ENCODE measurements at regions of chr12 and their contacts with region 1.

Region 1: DNA sequence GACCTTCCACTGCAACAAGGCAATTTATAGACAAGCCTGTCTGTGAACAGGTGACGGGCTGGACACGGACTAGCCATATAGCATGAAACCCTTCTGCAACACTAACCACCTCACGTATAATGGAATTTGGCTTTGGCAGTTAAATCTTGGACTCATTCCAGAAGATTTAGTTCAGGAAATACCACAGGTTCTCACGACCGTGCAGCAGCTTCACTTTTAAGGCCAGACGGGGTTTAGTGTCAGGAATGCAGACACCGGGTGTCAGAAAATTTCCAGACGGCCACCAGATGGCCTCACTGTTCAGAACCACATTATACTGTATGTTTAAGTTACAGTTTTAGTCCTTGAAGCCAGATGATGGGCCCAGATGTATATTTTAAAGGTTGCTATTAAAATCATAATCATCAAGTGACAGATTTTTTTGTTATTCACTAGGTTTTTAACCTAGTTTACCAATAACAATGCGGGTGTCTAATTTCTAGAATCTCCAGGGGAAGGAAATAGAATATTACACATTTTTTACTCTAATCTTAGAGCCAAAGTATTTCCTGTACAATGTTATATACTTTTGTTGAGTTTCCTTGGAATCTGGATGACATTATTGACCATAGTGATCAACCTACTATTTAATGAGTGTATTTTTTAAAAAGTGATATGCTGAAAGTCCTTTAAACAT is 90.5 kb upstream of the TMPO start:
- DNase-seq: peak; percentile 77
- H3K4me3 ChIP-seq: no peak overlapping the region
- H3K27ac ChIP-seq: no peak overlapping the region
- H3K4me1 ChIP-seq: peaks cover 8% of the 10 kb centered on the region
- H3K27me3 ChIP-seq: no peaks in the 10 kb centered on the region

Region 2: DNA sequence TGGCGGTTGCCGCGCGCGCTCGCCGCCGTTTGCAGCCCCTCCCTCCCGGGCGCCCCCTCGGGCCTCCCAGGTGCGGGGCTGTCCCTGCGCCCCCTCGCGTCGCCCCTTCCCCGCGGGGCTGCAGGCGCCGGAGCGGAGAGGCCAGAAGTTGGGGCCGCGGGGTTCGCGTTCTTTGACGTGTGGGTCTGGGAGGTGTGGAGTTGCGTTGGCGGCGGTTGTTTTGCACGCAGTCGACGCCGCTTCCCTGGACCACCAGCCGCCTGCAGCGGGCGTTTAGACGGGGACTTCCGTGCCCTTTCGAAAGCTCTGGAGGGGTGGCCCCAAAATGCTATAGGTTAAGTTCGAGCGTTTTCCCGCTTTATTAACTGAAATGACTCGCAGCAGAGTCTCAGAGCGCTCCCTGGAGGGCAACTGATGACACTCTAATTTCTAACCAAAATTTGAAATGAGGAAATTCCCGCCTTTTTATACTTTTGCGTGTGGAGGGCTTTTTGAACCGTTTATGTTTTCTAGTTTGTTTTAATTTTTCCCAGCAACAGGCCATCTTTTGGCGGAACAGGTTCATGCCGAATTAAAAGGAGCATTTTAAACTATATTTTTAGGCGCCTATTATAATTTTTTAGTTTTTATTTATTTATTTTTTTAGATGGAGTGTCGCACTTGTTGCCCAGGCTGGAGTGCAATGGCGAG is 91.5 kb after region 1 on chr12:
- in situ Hi-C with region 1: loop called (anchors 10 kb)
- DNase-seq: peak; percentile 94
- H3K4me3 ChIP-seq: peak overlapping the region; percentile 96
- H3K27ac ChIP-seq: peak overlapping the region; percentile 78
- H3K4me1 ChIP-seq: peaks cover 10% of the 10 kb centered on the region; the same call in 1 of the 2 replicates
- H3K27me3 ChIP-seq: no peaks in the 10 kb centered on the region

Region 3: DNA sequence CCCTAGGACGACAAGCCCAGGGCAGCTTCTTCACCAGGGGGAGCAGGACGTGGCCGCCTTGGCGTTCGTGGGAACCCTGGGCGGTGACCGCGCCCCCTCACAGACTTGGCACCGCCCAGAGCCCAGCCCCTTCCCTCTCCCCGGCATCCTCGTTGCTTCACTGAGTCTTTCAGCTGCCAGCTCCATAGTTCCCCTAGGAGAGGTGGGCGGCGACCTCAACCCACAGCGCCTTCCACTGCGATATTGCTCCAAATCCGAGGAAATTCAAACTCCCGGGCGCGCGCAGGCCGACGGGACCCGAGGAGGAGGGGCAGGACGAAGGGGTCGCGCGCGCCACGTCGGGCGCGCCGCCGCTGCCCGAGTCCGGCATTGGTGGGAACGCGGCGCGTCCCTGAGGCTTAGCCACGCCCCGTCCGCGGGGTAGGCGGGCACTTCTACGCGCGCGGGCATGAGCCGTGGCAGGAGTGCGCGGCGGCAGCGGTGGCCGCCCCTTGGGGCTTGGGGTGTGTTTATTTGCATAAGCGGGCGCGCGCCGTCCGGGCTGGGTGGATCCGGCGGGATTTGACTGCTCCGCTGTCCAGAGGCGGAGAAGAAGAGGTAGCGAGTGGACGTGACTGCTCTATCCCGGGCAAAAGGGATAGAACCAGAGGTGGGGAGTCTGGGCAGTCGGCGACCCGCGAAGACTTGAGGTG is 220.0 kb after region 1 on chr12 and contains the starts of genes APAF1 and IKBIP:
- in situ Hi-C with region 1: loop called (anchors 10 kb)
- DNase-seq: peak; percentile 99
- H3K4me3 ChIP-seq: peak within 1 kb of the TSS; percentile 86
- H3K27ac ChIP-seq: peak within 1 kb of the TSS; percentile 99
- H3K4me1 ChIP-seq: peaks cover 21% of the 10 kb centered on the region
- H3K27me3 ChIP-seq: no peaks in the 10 kb centered on the region
- total RNA-seq, gene APAF1: 23.4 and 24.5 TPM in 2 replicates
- total RNA-seq, gene IKBIP: 115 and 125 TPM in 2 replicates

Measured in GM23248 (cell line).